ENCODE measurements at regions of chr12 and their contacts with region 1.

Region 1: GRCh38 chr12:124917135-124917840 is 2.8 kb upstream of the UBC start:
- DNase-seq: peak; percentile 97
- H3K4me3 Mint-ChIP-seq: peak overlapping the region; percentile 99
- H3K27ac Mint-ChIP-seq: peak overlapping the region; percentile 100
- H3K4me1 Mint-ChIP-seq: peaks cover 75% of the 10 kb centered on the region
- H3K27me3 Mint-ChIP-seq: peaks cover 2% of the 10 kb centered on the region

Region 2: DNA sequence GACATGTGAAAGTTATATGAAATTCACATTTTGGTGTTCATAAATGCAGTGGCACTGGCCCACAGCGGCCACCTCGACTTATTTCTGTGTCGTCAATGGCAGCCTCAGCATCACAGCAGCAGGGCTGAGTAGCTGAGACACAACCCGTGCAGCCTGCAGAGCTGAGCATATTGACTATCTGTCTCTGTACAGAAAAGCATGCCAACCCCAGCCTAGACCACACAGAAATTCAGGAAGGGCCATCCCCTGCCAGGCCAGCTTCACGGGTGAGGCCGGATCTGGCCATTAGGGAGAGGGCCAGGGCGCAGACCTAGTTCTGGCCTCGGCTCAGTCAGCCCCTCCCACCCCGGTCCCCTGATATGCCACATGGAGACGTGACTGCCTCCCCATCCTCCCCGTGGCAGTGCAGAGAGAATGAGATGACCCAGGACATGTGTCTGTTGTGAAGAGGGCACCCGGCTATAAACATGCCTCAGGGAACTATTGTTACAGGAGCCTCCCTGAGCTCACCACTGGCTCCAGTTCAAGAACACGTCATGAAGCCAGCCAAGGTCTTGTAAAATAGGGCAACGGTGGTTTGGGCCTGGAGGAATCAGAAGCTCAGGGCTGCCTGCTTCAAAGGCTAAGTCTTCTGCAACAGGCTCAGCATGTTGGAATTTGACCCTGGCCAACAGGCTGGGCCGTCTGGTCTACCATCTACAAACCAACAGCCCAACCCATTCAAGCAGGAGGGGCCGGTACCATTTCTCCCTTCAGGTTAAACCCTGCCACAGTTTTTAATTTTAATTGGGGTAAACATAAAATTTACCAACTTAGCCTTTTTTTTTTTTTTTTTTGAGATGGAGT is 79.1 kb before region 1 on chr12:
- intact Hi-C with region 1: no loop called
- DNase-seq: no peak
- H3K4me3 Mint-ChIP-seq: no peak overlapping the region
- H3K27ac Mint-ChIP-seq: no peak overlapping the region
- H3K4me1 Mint-ChIP-seq: no peaks in the 10 kb centered on the region
- H3K27me3 Mint-ChIP-seq: no peaks in the 10 kb centered on the region

Region 3: DNA sequence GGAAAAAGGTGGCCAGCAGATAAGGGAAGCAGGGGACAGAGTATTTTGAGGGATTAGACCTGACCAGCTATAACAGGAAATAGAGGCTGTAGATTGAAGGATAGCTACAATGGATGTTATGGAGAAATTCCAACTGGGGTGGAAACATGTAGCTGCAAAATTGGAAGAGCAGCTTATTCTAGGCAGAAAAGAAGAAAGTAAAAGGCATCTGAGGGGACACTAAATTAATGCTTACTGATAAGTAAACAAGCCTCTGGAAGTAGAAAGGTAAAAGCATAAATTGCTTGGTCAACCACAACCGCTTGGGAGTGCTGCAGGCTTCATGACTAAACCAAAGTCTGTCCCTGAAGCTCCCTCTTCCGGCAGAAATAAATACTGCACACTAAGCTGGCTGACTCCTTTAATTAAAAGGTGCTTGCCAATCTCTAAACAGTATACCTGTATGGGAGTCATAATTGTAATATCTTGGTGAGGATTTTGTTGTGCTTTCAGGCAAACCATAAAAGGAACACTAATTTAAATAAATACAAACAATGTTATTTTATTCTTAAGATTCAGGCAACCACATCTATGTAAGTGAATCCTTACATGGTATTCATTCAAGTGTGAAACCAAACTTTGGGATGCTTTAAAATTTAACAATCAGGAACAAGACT is 10.6 kb before region 1 on chr12:
- intact Hi-C with region 1: loop called (anchors 1 kb)
- DNase-seq: peak; percentile 98
- H3K4me3 Mint-ChIP-seq: no peak overlapping the region
- H3K27ac Mint-ChIP-seq: no peak overlapping the region
- H3K4me1 Mint-ChIP-seq: peaks cover 24% of the 10 kb centered on the region
- H3K27me3 Mint-ChIP-seq: no peaks in the 10 kb centered on the region

Region 4: GRCh38 chr12:125006206-125006764 is 89.0 kb after region 1 on chr12:
- intact Hi-C with region 1: no loop called
- DNase-seq: no peak
- H3K4me3 Mint-ChIP-seq: no peak overlapping the region
- H3K27ac Mint-ChIP-seq: no peak overlapping the region
- H3K4me1 Mint-ChIP-seq: peaks cover 12% of the 10 kb centered on the region
- H3K27me3 Mint-ChIP-seq: no peaks in the 10 kb centered on the region

Measured in activated CD4-positive, alpha-beta T cell treated with anti-CD3 and anti-CD28 coated beads, Interleukin-2, amount 10 ng/mL, durations not matched to agents 24 days and 14 days (primary cell).